Activated T-helper 1 cell treated with anti-CD3 and anti-CD28 coated beads, Interleukin-12 subunit alpha, Interleukin-12 subunit beta, Interleukin-2, Interleukin-4 antibody, amounts not matched to agents 30 ng/mL and 10 ng/mL and 1 ng/mL, durations not matched to agents 14 hours and 24 hours and 36 hours (primary cell): ENCODE measurements at regions of chr2 and their contacts with region 1.

Region 1: GRCh38 chr2:25817630-25818029 is 60.7 kb downstream of the ASXL2 start:
- DNase-seq: no peak
- H3K4me3 Mint-ChIP-seq: no peak overlapping the region
- H3K27ac Mint-ChIP-seq: peak overlapping the region; percentile 59
- H3K4me1 Mint-ChIP-seq: peaks cover 60% of the 10 kb centered on the region
- H3K27me3 Mint-ChIP-seq: peaks cover 2% of the 10 kb centered on the region

Region 2: GRCh38 chr2:25586726-25587144 is 230.9 kb before region 1 on chr2:
- intact Hi-C with region 1: loop called (anchors 2 kb)
- DNase-seq: no peak
- H3K4me3 Mint-ChIP-seq: peak overlapping the region; percentile 71
- H3K27ac Mint-ChIP-seq: peak overlapping the region; percentile 92
- H3K4me1 Mint-ChIP-seq: peaks cover 27% of the 10 kb centered on the region
- H3K27me3 Mint-ChIP-seq: no peaks in the 10 kb centered on the region

Region 3: GRCh38 chr2:25806941-25807340 is 10.7 kb before region 1 on chr2:
- intact Hi-C with region 1: loop called (anchors 1 kb)
- DNase-seq: no peak
- H3K4me3 Mint-ChIP-seq: no peak overlapping the region
- H3K27ac Mint-ChIP-seq: no peak overlapping the region
- H3K4me1 Mint-ChIP-seq: peaks cover 68% of the 10 kb centered on the region
- H3K27me3 Mint-ChIP-seq: no peaks in the 10 kb centered on the region

Region 4: DNA sequence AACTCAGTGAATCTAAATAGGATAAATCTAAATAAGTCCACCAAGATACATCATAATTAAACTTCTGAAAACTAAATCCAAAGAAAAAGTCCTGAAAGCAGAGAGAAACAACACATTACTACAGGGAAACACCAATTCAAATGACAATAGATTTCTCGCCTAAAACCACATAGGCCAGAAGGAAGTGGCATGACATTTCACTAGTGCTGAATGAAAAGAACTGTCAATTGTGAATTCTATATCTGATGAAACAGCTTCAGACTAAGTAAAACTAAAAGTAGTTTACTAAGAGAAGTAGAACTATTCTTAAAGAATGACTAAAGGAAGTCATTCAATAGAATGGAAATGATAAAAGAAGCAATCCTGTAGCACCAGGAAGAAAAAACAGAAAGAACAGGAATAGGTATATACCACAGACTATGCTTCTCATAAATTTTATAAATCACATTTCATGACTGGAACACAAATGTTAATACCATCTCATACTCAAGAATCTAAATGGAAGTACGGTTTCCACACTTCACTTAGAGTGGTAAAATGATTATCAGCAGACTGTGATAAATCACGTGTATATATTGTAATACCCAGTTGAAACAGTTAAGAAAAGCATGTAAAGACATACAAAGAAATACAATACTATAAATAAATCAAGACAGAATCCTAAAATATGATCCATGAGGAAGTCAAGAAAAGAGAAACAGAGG is 14.3 kb after region 1 on chr2:
- intact Hi-C with region 1: loop called (anchors 1 kb)
- DNase-seq: no peak
- H3K4me3 Mint-ChIP-seq: peak overlapping the region; percentile 63
- H3K27ac Mint-ChIP-seq: peak overlapping the region; percentile 90
- H3K4me1 Mint-ChIP-seq: peaks cover 49% of the 10 kb centered on the region
- H3K27me3 Mint-ChIP-seq: no peaks in the 10 kb centered on the region